ENCODE measurements at regions of chr1 and their contacts with region 1.

Region 1: GRCh38 chr1:8026153-8026975 is at the start of gene ERRFI1:
- DNase-seq: peak; percentile 86
- ATAC-seq: peak; percentile 82
- H3K4me3 ChIP-seq: peak within 1 kb of the TSS; percentile 94 to 100 (median 95)
- H3K27ac ChIP-seq: peak within 1 kb of the TSS; percentile 99
- H3K4me1 ChIP-seq: peaks cover 29% of the 10 kb centered on the region
- H3K27me3 ChIP-seq: peaks cover 0 to 5% of the 10 kb centered on the region in 2 experiments; a peak in 1 of 5 replicates
- CTCF ChIP-seq: peak; percentile 21; the same call in 1 of the 2 replicates
- EP300 ChIP-seq: no peak
- POLR2A ChIP-seq: peak; percentile 95 to 97
- RAD21 ChIP-seq: peak; percentile 59
- total RNA-seq, gene ERRFI1: 84.4 and 99.5 TPM in 2 replicates

Region 2: DNA sequence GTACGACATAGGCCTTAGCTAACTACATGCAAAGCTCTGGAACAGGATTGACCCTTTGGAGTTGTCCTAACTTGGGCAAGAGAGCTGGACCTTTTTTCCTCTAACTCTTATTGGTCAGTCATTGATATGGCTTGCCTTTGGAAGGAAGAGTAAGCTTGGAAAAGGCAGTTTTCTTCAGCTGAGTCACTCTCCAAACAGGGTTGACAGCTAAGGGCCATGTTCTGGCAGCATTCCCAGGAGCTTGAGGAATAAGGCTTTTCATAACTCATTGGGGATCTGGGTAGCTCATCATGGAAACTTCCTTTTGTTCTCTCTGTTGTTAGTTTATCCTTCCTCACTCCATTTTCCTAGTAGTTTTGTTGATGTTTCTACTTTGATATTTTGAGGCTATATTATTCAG is 14.2 kb after region 1 on chr1:
- CTCF ChIA-PET with region 1: no interaction called
- POLR2A ChIA-PET with region 1: interaction called, 28 read pairs
- in situ Hi-C with region 1: no loop called
- intact Hi-C with region 1: no loop called
- DNase-seq: peak; percentile 96
- ATAC-seq: peak; percentile 88
- H3K4me3 ChIP-seq: no peak overlapping the region
- H3K27ac ChIP-seq: peak overlapping the region; percentile 28
- H3K4me1 ChIP-seq: peaks cover 29% of the 10 kb centered on the region
- H3K27me3 ChIP-seq: no peaks in the 10 kb centered on the region
- CTCF ChIP-seq: no peak
- EP300 ChIP-seq: peak in 1 of 2 experiments; percentile 83; a peak in 2 of 4 replicates
- POLR2A ChIP-seq: no peak
- RAD21 ChIP-seq: no peak

Region 3: GRCh38 chr1:8097077-8097799 is 70.9 kb after region 1 on chr1:
- CTCF ChIA-PET with region 1: no interaction called
- POLR2A ChIA-PET with region 1: interaction called, 21 read pairs
- in situ Hi-C with region 1: no loop called
- intact Hi-C with region 1: no loop called
- DNase-seq: peak; percentile 74
- ATAC-seq: peak; percentile 49
- H3K4me3 ChIP-seq: no peak overlapping the region
- H3K27ac ChIP-seq: peak overlapping the region; percentile 72
- H3K4me1 ChIP-seq: peaks cover 67% of the 10 kb centered on the region
- H3K27me3 ChIP-seq: no peaks in the 10 kb centered on the region
- CTCF ChIP-seq: no peak
- EP300 ChIP-seq: peak in 1 of 2 experiments; percentile 56; a peak in 1 of 4 replicates
- POLR2A ChIP-seq: no peak
- RAD21 ChIP-seq: no peak

Region 4: GRCh38 chr1:8169364-8170058 is 143.1 kb after region 1 on chr1:
- CTCF ChIA-PET with region 1: no interaction called
- POLR2A ChIA-PET with region 1: interaction called, 60 read pairs
- in situ Hi-C with region 1: no loop called
- intact Hi-C with region 1: no loop called
- DNase-seq: peak; percentile 93
- ATAC-seq: peak; percentile 90
- H3K4me3 ChIP-seq: peak overlapping the region in 1 of 3 experiments; percentile 42; a peak in 2 of 6 replicates
- H3K27ac ChIP-seq: peak overlapping the region; percentile 97
- H3K4me1 ChIP-seq: peaks cover 76% of the 10 kb centered on the region
- H3K27me3 ChIP-seq: no peaks in the 10 kb centered on the region
- CTCF ChIP-seq: no peak
- EP300 ChIP-seq: peak in 1 of 2 experiments; percentile 86; a peak in 2 of 4 replicates
- POLR2A ChIP-seq: peak in 1 of 2 experiments; percentile 43; a peak in 3 of 4 replicates
- RAD21 ChIP-seq: no peak

Region 5: GRCh38 chr1:8211589-8212442 is 185.5 kb after region 1 on chr1:
- CTCF ChIA-PET with region 1: no interaction called
- POLR2A ChIA-PET with region 1: interaction called, 20 read pairs
- in situ Hi-C with region 1: no loop called
- intact Hi-C with region 1: loop called (anchors 1 kb)
- DNase-seq: peak; percentile 97
- ATAC-seq: peak; percentile 94
- H3K4me3 ChIP-seq: no peak overlapping the region
- H3K27ac ChIP-seq: peak overlapping the region; percentile 87
- H3K4me1 ChIP-seq: peaks cover 81% of the 10 kb centered on the region
- H3K27me3 ChIP-seq: no peaks in the 10 kb centered on the region
- CTCF ChIP-seq: peak; percentile 36; the same call in 1 of the 2 replicates
- EP300 ChIP-seq: peak in 1 of 2 experiments; percentile 98; a peak in 3 of 4 replicates
- POLR2A ChIP-seq: peak; percentile 59 to 71
- RAD21 ChIP-seq: no peak

Region 6: GRCh38 chr1:8314346-8315280 is 288.2 kb after region 1 on chr1:
- CTCF ChIA-PET with region 1: interaction called, 14 read pairs
- POLR2A ChIA-PET with region 1: interaction called, 49 read pairs
- in situ Hi-C with region 1: no loop called
- intact Hi-C with region 1: loop called (anchors 1 kb)
- DNase-seq: peak; percentile 73
- ATAC-seq: peak; percentile 83
- H3K4me3 ChIP-seq: peak overlapping the region; percentile 24 to 64 (median 37); a peak in 5 of 6 replicates
- H3K27ac ChIP-seq: no peak overlapping the region
- H3K4me1 ChIP-seq: peaks cover 66% of the 10 kb centered on the region
- H3K27me3 ChIP-seq: peaks cover 2 to 6% of the 10 kb centered on the region in 2 experiments; a peak in 1 of 5 replicates
- CTCF ChIP-seq: peak; percentile 99
- EP300 ChIP-seq: 0 out of 4 replicates have a peak, but pooled peaks of 1 of the 2 experiments have one; percentile 28
- POLR2A ChIP-seq: no peak
- RAD21 ChIP-seq: peak; percentile 96